AG04449 (cell line): ENCODE measurements at regions of chr14 and their contacts with region 1.

Region 1: DNA sequence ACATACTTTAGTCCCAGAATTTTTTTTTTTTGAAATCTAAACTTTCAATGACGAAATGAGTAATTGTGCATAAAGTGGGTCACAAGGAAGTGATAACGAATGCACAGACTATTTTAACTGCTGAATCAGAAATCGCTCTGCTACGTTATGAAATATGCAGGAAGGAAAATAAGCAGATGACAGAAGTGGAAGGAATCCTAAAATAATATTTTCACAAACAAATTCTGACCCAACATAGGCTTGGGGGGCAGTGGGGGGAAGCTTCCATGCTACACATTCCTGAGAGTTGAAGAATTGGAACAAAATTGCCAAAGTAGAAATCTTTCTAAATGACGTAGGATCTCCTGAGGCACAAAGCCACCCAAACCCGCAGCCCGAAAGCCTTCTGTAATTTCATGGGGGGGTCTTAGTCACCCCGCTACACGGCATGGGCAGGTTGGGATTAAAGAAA is 89.6 kb downstream of the ARF6 start:
- DNase-seq: peak; percentile 93
- H3K4me3 ChIP-seq: 0 out of 2 replicates have a peak overlapping the region, but pooled peaks have one; percentile 16
- CTCF ChIP-seq: no peak

Region 2: DNA sequence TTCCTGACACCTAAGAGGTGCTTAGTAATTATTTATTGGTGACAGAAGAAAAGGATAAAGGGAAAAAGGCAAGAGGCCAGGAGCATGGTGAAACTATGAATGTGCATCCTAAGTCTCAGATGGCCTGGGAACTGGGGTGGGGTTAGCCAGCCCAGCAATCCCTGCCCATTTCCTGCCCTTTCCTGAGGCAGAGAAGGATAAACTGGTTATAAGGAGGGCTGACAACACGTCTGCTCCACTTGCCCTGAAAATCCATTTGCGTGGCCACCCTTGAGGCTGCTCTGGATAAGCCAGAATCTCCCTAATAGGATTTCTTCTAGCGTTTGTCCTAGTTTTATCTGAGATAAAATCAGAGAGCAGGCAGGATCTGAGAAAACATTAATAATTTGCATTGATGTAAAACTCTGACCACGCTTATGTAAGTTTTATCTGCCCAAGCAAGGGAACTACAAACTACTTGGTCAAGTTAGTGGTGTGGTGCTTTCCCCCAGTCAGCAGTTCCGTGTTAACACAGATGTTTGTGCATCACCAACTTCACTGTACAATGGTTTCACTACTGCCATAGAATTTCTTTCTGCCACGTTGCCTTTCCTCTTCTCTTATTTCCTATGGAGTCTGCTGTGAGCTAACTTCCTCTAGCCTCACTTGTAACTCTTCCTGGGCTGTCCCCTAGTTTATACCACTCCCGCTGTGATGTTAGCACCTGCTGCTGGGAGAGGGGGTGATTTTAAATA is 789.0 kb before region 1 on chr14:
- CTCF ChIA-PET with region 1: no interaction called
- POLR2A ChIA-PET with region 1: no interaction called
- DNase-seq: no peak
- H3K4me3 ChIP-seq: no peak overlapping the region
- CTCF ChIP-seq: no peak

Region 3: DNA sequence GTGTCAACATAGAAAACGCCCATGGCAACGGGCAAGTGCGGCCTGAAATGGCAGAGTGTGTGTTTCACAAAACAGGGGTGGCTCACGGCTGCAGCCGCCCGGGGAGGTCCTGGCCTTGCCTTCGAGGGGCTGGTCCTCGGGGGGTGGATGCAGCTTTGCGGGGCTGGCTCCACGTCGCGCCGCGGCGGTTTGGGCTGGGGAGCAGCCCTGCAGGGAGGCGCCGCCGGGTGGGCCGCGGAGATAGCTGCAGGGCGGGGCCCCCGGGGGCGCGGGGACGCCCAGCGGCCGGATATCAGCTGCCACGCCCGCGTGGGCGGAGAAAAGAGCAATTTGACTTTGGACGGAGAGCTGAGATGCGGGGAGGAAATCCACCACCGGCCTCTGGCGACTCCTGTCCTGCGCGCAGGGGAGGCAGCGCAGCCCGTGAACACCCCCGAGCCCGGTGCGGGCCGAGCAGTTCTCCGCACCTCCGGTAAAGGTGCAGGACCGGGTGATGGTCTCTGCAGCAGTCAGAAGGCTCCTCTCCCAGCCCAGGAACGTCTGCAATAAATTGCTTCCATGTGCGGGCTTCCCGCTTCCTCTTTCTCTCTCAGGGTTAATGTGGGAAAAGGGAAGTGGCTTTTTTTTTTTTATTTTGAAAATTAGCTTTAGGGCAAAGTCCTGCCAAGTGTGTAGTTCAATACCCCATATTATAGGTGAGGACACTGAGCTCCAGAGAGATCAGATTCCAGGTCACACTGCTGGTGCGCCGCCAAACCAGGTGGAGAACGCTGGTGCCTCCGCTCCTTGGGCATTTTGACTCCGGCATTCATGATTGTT is 20.9 kb after region 1 on chr14:
- CTCF ChIA-PET with region 1: no interaction called
- POLR2A ChIA-PET with region 1: interaction called, 10 read pairs
- DNase-seq: no peak
- H3K4me3 ChIP-seq: peak overlapping the region; percentile 54
- CTCF ChIP-seq: no peak